ENCODE measurements at regions of chr14 and their contacts with region 1.

Region 1: GRCh38 chr14:59428581-59429012 is 36.6 kb downstream of the GPR135 start:
- DNase-seq: no peak
- H3K4me3 ChIP-seq: no peak overlapping the region
- H3K27ac ChIP-seq: peak overlapping the region in 1 of 2 donors; percentile 34
- H3K4me1 ChIP-seq: no peaks in the 10 kb centered on the region
- H3K27me3 ChIP-seq: no peaks in the 10 kb centered on the region
- CTCF ChIP-seq: peak in 2 of 4 experiments; percentile 15 to 28
- POLR2A ChIP-seq: no peak

Region 2: DNA sequence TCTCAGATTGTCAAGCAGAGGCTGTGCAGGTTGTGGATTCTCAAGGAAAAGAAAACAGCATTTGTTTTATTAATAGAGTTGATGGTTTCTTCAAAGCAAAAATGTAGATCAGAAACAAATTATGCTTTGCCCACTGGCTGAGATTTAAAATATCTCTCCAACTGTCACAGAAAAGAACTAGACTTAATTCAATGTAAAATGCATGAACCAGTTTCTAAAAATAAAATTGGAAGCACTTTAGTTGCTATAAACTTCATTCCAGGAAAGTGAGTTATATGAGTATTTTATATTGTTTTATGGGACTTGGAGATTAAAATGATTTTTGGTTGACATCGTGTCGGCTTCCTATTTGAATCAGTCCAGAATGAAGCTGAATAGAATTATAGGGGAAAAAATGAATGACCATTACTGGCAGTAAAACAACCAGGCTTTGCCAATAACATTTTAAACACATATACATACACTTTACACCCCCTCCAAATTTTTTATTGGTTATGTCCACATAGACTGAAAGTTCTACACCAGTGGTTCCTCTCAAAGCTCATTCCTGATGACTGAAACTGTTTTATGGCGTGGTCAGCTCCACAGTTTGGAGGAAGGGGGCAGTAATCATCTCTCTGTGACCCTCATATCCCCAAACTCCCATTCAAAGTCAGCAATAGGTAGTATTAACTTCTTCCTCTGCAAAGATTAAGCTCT is 295.7 kb before region 1 on chr14:
- intact Hi-C with region 1: loop called (anchors 5 kb)
- DNase-seq: no peak
- H3K4me3 ChIP-seq: no peak overlapping the region
- H3K27ac ChIP-seq: no peak overlapping the region
- H3K4me1 ChIP-seq: no peaks in the 10 kb centered on the region
- H3K27me3 ChIP-seq: no peaks in the 10 kb centered on the region
- CTCF ChIP-seq: no peak
- POLR2A ChIP-seq: no peak

Region 3: DNA sequence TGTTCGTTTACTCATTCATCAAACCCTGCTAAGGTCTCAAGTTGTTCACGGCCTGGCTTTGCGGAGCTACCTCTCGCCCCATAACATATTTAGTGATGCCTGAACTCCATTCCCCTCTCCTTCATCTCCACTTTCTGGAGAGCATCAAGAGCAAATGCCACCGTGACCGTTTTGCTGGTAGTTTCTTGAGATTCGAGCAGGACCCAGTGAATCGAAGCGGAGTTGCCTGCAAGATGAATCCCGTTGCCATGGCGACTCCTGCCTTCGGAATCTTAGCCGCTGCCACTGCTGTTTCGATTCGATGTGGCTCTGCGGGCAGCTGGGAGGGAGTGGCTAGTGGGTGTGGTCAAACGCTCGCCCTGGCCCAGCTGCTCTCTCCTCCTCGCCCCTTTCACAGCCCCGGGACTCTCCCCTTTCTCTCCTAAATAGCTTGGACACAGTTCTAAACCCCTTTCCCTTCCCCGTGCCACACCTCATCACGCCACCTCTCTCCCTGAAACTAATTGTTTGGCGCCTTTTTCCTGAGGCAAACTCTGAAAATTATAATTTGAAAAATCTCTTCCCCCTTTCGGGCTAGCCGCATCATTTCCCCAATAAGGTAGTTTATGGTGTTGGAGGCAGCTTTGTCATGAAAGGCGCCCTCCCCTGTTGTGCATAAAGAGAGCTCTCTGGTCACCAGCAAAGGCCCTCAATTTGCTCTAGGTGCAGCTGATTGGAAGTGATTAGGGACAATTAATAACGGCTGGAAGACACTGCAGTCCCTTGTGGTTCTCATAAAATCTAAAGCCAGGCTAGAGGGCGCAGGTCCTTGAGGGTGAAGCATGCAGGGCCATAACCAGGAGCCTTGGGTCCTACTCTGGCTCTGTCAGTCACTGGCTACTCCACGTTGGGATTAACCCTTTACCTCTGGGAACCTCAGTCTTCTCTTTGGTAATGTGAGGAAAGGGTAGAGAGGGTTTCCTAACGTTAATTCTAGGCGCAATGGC is 238.5 kb before region 1 on chr14:
- intact Hi-C with region 1: loop called (anchors 5 kb)
- DNase-seq: peak; percentile 80
- H3K4me3 ChIP-seq: peak overlapping the region; percentile 66 to 76
- H3K27ac ChIP-seq: peak overlapping the region; percentile 94 to 95
- H3K4me1 ChIP-seq: no peaks in the 10 kb centered on the region
- H3K27me3 ChIP-seq: no peaks in the 10 kb centered on the region
- CTCF ChIP-seq: no peak
- POLR2A ChIP-seq: no peak

Region 4: GRCh38 chr14:59320763-59321640 is 107.6 kb before region 1 on chr14:
- intact Hi-C with region 1: no loop called
- DNase-seq: no peak
- H3K4me3 ChIP-seq: no peak overlapping the region
- H3K27ac ChIP-seq: no peak overlapping the region
- H3K4me1 ChIP-seq: peaks cover 6% of the 10 kb centered on the region
- H3K27me3 ChIP-seq: no peaks in the 10 kb centered on the region
- CTCF ChIP-seq: no peak
- POLR2A ChIP-seq: no peak

Region 5: DNA sequence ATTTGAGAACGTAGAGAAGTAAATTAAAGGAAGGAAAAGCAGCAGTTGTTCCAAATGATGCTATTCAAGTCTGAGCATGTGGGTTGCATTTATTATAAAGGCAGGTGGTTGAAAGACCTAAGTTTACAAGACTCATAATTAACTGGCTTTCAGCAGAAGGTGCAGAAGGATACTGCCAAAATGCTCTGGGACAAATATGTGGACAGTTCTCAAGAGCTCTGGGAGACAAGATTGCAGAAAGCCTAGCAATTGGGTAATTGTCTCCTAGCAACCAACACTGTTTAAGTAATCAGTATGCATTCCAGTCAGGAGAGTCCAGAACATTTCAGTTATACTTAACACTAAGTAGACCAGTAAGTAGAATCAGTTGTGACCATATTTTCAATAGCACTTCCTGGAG is 94.9 kb before region 1 on chr14:
- intact Hi-C with region 1: loop called (anchors 5 kb)
- DNase-seq: peak; percentile 67
- H3K4me3 ChIP-seq: no peak overlapping the region
- H3K27ac ChIP-seq: peak overlapping the region; percentile 34 to 65
- H3K4me1 ChIP-seq: no peaks in the 10 kb centered on the region
- H3K27me3 ChIP-seq: no peaks in the 10 kb centered on the region
- CTCF ChIP-seq: no peak
- POLR2A ChIP-seq: no peak

Region 6: GRCh38 chr14:59377991-59378601 is 50.5 kb before region 1 on chr14:
- intact Hi-C with region 1: loop called (anchors 5 kb)
- DNase-seq: no peak
- H3K4me3 ChIP-seq: no peak overlapping the region
- H3K27ac ChIP-seq: peak overlapping the region; percentile 13 to 40
- H3K4me1 ChIP-seq: no peaks in the 10 kb centered on the region
- H3K27me3 ChIP-seq: no peaks in the 10 kb centered on the region
- CTCF ChIP-seq: no peak
- POLR2A ChIP-seq: no peak

Region 7: GRCh38 chr14:59819446-59820088 is 391.0 kb after region 1 on chr14:
- intact Hi-C with region 1: no loop called
- DNase-seq: no peak
- H3K4me3 ChIP-seq: no peak overlapping the region
- H3K27ac ChIP-seq: no peak overlapping the region
- H3K4me1 ChIP-seq: no peaks in the 10 kb centered on the region
- H3K27me3 ChIP-seq: no peaks in the 10 kb centered on the region
- CTCF ChIP-seq: no peak
- POLR2A ChIP-seq: no peak